Vagina (tissue), 2 donors: ENCODE measurements at regions of chr11 and their contacts with region 1.

Region 1: DNA sequence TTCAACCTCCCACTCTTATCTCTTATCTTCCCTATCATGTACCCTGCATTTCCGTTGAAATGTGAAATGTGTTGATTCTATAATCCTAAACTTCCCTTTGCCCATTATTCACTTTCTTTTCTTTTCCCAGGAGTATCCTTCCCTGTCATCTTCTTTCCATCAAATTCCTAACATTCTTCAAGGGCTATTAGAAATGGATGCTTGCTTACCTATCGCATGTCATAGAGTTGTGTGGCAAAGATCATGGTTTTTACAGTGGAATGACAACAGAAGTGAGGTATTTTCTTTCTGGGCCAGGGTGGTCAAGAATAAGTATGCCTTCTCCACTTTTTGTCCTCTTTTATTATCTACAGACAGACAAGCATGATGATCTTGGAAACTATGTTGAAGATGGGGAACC is 124.4 kb upstream of the SLC5A12 start:
- DNase-seq: no peak
- H3K4me3 ChIP-seq: no peak overlapping the region
- H3K27ac ChIP-seq: peak overlapping the region; percentile 81
- H3K4me1 ChIP-seq: peaks cover 67% of the 10 kb centered on the region
- H3K27me3 ChIP-seq: no peaks in the 10 kb centered on the region
- CTCF ChIP-seq: no peak
- POLR2A ChIP-seq: no peak

Region 2: GRCh38 chr11:26583538-26583937 is 262.7 kb before region 1 on chr11:
- intact Hi-C with region 1: no loop called
- DNase-seq: no peak
- H3K4me3 ChIP-seq: no peak overlapping the region
- H3K27ac ChIP-seq: no peak overlapping the region
- H3K4me1 ChIP-seq: no peaks in the 10 kb centered on the region
- H3K27me3 ChIP-seq: no peaks in the 10 kb centered on the region
- CTCF ChIP-seq: no peak
- POLR2A ChIP-seq: no peak

Region 3: DNA sequence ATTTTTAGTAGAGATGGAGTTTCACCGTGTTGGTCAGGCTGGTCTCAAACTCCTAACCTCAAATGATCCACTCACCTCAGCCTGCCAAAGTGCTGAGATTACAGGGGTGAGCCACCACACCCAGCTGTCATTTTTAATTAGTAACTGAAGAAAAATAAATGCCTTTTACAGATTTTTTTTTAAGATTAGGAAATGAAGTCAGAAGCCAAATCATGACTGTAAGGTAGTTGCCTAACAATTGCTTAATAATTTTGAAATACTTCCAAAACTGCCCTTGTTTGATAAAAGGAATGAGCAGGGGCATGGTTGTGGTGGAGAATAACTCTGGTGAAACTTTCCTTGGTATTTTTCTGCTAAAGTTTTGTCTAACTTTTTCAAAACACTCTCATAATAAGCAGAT is 25.5 kb before region 1 on chr11:
- intact Hi-C with region 1: loop called (anchors 1 kb)
- DNase-seq: no peak
- H3K4me3 ChIP-seq: no peak overlapping the region
- H3K27ac ChIP-seq: no peak overlapping the region
- H3K4me1 ChIP-seq: no peaks in the 10 kb centered on the region
- H3K27me3 ChIP-seq: no peaks in the 10 kb centered on the region
- CTCF ChIP-seq: no peak
- POLR2A ChIP-seq: no peak